Colonic mucosa (tissue), 4 donors: ENCODE measurements at regions of chr6 and their contacts with region 1.

Region 1: DNA sequence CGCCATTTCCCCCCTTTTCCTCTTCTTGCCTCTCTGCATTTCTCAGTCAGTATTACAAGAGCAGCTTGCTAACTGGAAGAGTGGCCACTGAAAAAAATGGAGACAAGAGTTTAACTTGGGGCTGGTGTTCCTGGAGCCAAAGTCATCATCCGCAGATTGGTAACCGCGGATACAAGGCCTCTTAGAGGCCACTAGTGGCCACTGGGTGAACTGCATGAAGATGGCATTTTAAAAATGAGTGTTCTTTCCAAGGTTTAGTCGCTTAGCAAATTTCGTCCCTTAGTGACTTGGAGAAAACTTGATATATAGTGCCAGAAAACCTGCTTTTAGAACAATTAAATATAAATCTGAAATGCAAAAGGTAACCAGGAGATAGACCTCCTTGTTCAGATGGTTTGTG is 4.8 kb downstream of the F13A1 start:
- DNase-seq: peak; percentile 32
- H3K4me3 ChIP-seq: no peak overlapping the region
- H3K27ac ChIP-seq: no peak overlapping the region
- H3K4me1 ChIP-seq: no peaks in the 10 kb centered on the region
- H3K27me3 ChIP-seq: no peaks in the 10 kb centered on the region
- CTCF ChIP-seq: peak; percentile 84

Region 2: DNA sequence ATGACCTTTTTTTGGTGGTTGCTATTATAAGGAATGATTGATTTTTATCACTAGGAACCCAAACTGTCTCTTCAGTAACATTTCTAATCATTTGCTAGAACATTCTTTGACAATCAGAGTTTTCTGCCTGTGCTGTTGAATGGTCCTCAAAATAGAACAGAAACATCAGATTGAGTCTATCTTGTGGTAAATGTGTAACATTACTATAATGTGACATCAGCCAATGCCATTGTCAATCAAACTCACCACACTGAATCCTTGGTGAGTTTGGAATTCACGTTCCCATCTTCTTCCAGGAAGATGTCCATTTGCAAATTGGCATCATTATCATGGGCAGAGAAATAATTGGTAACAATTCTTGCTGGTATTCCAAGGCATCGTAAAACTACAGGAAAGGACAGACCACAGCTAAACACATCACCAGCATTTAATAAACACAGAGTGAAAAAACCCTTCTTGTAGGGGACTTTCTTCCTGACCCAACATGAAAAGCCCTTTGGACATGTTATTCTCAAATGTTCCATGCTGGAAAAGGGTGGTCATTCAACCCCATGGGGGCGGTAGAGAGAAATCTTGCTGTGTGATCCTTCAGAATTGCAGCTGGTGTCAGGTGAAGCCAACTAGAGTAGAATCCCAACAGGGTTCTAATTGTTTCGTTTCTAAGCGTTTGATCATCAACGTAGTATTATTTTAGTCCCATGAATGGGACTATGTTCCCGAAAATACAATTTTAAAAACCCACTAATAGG is 93.7 kb before region 1 on chr6:
- intact Hi-C with region 1: loop called (anchors 5 kb)
- DNase-seq: peak; percentile 50
- H3K4me3 ChIP-seq: no peak overlapping the region
- H3K27ac ChIP-seq: no peak overlapping the region
- H3K4me1 ChIP-seq: peaks cover 5% of the 10 kb centered on the region
- H3K27me3 ChIP-seq: no peaks in the 10 kb centered on the region
- CTCF ChIP-seq: peak; percentile 41